Calu3 (cell line): ENCODE measurements at regions of chrX and their contacts with region 1.

Region 1: GRCh38 chrX:117996918-117997480 is 119.6 kb downstream of the KLHL13 start:
- DNase-seq: no peak
- H3K4me3 Mint-ChIP-seq: no peak overlapping the region
- H3K27ac Mint-ChIP-seq: no peak overlapping the region
- H3K4me1 Mint-ChIP-seq: no peaks in the 10 kb centered on the region
- H3K27me3 Mint-ChIP-seq: no peaks in the 10 kb centered on the region
- CTCF ChIP-seq: no peak

Region 2: GRCh38 chrX:118116713-118117550 is 119.9 kb after region 1 on chrX and contains the start of gene KLHL13:
- CTCF ChIA-PET with region 1: no interaction called
- intact Hi-C with region 1: loop called (anchors 10 kb)
- DNase-seq: peak; percentile 13
- H3K4me3 Mint-ChIP-seq: peak within 1 kb of the TSS; percentile 62
- H3K27ac Mint-ChIP-seq: no peak within 1 kb of the TSS
- H3K4me1 Mint-ChIP-seq: no peaks in the 10 kb centered on the region
- H3K27me3 Mint-ChIP-seq: peaks cover 28% of the 10 kb centered on the region
- CTCF ChIP-seq: no peak
- total RNA-seq, gene KLHL13: 0.64 and 0.95 TPM in 2 replicates

Region 3: DNA sequence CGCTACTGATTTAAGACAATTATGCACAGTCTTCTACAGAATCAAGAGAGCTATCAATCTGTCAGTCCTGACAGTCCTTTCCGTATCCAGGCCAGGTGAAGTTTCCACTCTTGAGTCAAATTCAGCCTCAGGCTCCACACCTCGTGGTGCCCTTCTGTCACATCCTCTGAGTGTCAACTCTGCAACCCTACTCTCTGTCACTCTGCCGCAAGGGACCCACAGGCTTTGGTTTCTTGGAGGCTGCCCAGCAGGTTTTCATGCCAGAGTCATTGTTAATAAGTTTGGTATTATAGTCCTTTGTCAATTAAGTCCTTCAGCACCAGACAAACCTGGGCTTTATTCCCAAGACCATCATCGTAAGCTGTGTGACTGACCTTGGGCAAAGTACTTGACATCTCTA is 203.0 kb after region 1 on chrX:
- CTCF ChIA-PET with region 1: no interaction called
- intact Hi-C with region 1: no loop called
- DNase-seq: peak; percentile 36
- H3K4me3 Mint-ChIP-seq: no peak overlapping the region
- H3K27ac Mint-ChIP-seq: no peak overlapping the region
- H3K4me1 Mint-ChIP-seq: no peaks in the 10 kb centered on the region
- H3K27me3 Mint-ChIP-seq: no peaks in the 10 kb centered on the region
- CTCF ChIP-seq: no peak